ENCODE measurements at regions of chr10 and their contacts with region 1.

Region 1: DNA sequence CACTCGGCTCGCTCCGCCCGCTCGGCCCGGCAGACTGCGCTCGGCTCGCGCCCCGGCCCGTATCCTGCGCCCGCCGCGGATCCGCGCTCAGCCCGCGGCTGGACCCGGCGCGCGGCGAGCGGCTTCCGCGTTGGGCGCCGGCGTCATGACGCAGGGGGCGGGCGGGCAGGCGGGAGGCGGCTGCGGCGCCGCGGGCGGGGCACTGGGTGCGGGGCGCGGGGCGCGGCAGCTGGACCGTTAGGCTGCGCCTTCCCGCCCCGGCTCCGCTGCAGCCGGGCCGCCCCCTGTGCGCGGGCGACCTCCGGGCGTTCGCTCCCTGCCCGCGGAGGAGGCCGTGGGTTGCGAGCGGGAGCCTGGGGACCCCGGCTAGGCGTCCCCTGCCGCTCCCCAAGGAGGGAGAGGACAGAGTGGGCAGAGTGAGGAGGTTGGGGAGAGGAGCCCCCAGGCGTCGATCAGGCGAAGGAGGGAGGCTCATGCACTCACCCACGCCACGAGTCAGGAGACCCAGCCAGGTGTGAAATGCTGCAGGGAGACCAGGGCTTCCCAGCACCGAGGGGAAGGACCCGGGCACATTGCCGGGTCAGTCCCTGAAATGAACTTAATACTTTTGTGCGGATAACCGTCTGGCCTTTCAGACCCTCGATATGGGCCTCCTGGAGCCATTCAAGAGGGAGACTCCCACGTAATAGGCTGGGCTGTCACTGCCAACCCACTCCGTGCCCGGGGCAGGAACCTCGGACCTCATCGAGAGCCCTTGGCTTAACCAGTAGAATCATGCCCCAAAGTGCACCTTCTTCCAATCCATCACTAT is at the start of gene PIP4K2A:
- DNase-seq: peak; percentile 62 to 79 (median 73)
- H3K4me3 ChIP-seq: peak within 1 kb of the TSS; percentile 46 to 89 (median 56)
- H3K27ac ChIP-seq: peak within 1 kb of the TSS in 4 of 5 donors; percentile 83 to 95 (median 86)
- H3K4me1 ChIP-seq: peaks cover 14 to 35% of the 10 kb centered on the region in 2 donors
- H3K27me3 ChIP-seq: no peaks in the 10 kb centered on the region
- CTCF ChIP-seq: no peak
- POLR2A ChIP-seq: peak; percentile 69 to 74
- total RNA-seq, gene PIP4K2A: 23.8 to 70.6 (median 29.3) TPM

Region 2: GRCh38 chr10:22573820-22574569 is 140.7 kb before region 1 on chr10:
- intact Hi-C with region 1: loop called in 1 of 2 experiments (anchors 10 kb)
- DNase-seq: peak in 3 of 7 donors; percentile 27 to 41 (median 30)
- H3K4me3 ChIP-seq: no peak overlapping the region
- H3K27ac ChIP-seq: no peak overlapping the region
- H3K4me1 ChIP-seq: no peaks in the 10 kb centered on the region
- H3K27me3 ChIP-seq: no peaks in the 10 kb centered on the region
- CTCF ChIP-seq: peak in 5 of 6 experiments; percentile 41 to 60 (median 58)
- POLR2A ChIP-seq: no peak

Region 3: DNA sequence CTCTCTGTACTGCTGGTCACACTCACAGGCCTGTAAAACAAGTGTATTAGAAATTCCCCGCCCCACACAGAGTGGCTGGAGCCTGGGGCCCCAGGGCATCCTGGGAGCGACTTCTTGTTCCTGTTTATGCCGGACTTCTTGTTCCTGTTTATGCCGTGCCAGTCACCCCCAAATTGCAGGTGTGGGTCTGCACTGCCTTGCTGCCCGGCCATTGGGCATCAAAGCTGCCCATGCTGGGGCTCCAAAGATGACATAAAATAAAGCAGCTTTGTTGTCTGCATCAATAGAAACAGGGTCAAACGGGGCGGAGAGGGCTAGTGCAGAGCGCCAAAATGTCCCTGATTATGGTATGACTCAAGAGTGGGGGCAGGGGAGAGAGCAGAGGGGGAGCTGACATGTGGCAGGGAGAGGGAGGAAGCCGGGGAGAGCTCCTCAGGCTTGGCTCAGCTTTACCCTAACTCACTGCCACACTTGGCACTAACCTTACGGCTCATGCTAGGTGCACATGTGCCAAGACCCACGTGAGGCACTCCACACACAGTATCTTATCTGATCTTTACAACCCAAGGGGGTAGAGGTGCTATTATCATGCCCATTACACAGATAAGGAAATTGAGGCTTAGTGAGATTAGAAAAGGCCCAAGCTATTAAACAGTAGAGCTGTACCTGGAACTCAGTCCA is 98.7 kb before region 1 on chr10:
- intact Hi-C with region 1: loop called (anchors 10 kb)
- DNase-seq: peak; percentile 46 to 86 (median 77)
- H3K4me3 ChIP-seq: peak overlapping the region in 1 of 4 donors; percentile 27
- H3K27ac ChIP-seq: peak overlapping the region in 4 of 5 donors; percentile 49 to 85 (median 70)
- H3K4me1 ChIP-seq: peaks cover 31 to 62% of the 10 kb centered on the region in 2 donors
- H3K27me3 ChIP-seq: no peaks in the 10 kb centered on the region
- CTCF ChIP-seq: no peak
- POLR2A ChIP-seq: no peak

Region 4: DNA sequence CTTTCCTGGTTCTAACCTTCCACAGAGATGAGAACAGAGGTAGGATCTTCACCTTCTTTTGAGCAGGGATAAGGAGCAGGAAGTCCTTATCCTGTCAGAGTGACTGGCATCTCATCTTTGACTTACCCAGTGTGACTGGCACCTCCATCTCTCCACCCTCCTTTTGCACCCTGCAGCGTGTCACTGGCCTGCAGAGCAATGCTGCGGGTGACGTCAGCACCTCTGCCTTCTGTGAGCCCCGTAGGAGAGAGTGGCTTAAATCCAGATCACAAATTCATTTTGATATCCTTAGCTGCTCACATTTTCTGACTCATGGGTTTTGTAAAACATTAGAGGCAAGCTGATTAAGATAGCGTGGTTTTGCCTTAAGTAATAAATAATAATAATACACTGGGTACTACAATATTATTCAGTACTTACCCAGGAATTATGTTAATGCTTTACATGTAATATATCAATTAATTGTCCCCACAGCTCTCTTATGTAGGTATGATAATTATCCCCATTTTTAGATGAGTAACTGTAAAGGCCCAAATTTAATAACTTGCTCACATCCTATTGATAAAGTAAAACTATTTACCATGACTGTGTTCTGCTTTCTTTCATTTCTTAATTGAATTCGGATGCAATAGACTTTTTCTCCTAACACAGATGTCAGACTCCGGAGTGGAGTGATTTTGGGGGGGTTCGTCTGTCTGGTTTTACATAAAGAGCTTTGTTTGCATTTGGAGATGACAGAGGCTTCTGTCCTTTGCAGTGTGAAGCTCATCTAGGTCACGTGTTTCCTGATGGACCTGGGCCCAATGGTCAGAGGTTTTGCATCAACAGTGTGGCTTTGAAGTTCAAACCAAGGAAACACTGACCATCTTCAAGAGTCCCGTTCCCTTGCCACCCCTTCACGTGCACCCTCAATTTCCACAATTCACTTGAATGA is 405.6 kb after region 1 on chr10:
- intact Hi-C with region 1: no loop called
- DNase-seq: no peak
- H3K4me3 ChIP-seq: no peak overlapping the region
- H3K27ac ChIP-seq: no peak overlapping the region
- H3K4me1 ChIP-seq: no peaks in the 10 kb centered on the region
- H3K27me3 ChIP-seq: no peaks in the 10 kb centered on the region
- CTCF ChIP-seq: no peak
- POLR2A ChIP-seq: no peak